Heart right ventricle (tissue), 16 donors: ENCODE measurements at regions of chr4 and their contacts with region 1.

Region 1: GRCh38 chr4:34664051-34664450 is 1580.3 kb downstream of the ARAP2 start:
- DNase-seq: no peak
- ATAC-seq: no peak
- H3K4me3 ChIP-seq: no peak overlapping the region
- H3K27ac ChIP-seq: no peak overlapping the region
- H3K4me1 ChIP-seq: no peaks in the 10 kb centered on the region
- H3K27me3 ChIP-seq: no peaks in the 10 kb centered on the region
- CTCF ChIP-seq: no peak

Region 2: DNA sequence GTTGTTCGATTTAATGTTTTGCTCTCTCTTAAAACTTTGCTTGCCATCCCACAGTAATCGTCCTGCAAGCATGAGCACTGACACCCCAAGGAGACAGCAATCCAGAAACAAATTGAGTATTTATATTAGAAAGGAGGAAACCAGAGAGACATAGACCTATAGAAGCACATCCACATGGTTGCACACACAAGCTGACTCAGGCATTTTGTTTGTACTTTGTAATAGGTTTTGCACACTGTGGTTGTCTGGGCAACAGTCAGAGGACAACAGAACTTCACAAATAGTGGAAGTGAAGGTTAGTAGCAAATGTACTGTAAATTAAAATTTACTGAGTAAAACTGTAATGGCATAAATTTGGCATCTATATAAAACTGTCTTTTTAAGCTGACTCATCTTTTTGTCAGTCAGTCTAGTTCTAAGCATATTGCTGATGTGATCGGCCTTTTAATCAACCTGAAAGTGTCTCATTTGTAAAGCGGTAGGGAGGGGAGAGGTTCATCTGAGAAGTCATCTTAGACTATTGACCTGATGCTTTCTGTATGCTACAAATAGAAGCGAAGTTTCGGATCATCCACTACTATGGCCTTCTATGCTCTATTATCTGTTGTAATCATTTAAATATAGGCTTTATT is 44.4 kb before region 1 on chr4:
- intact Hi-C with region 1: loop called in 1 of 10 experiments (anchors 5 kb)
- DNase-seq: no peak
- ATAC-seq: no peak
- H3K4me3 ChIP-seq: no peak overlapping the region
- H3K27ac ChIP-seq: no peak overlapping the region
- H3K4me1 ChIP-seq: no peaks in the 10 kb centered on the region
- H3K27me3 ChIP-seq: no peaks in the 10 kb centered on the region
- CTCF ChIP-seq: no peak

Region 3: GRCh38 chr4:34861661-34862060 is 197.6 kb after region 1 on chr4:
- intact Hi-C with region 1: no loop called
- DNase-seq: no peak
- ATAC-seq: no peak
- H3K4me3 ChIP-seq: no peak overlapping the region
- H3K27ac ChIP-seq: no peak overlapping the region
- H3K4me1 ChIP-seq: no peaks in the 10 kb centered on the region
- H3K27me3 ChIP-seq: no peaks in the 10 kb centered on the region
- CTCF ChIP-seq: no peak